Psoas muscle (tissue), 8 donors: ENCODE measurements at regions of chr12 and their contacts with region 1.

Region 1: GRCh38 chr12:59780605-59781135 is 184.8 kb downstream of the SLC16A7 start:
- DNase-seq: no peak
- ATAC-seq: no peak
- H3K4me3 ChIP-seq: no peak overlapping the region
- H3K27ac ChIP-seq: no peak overlapping the region
- H3K4me1 ChIP-seq: no peaks in the 10 kb centered on the region
- H3K27me3 ChIP-seq: no peaks in the 10 kb centered on the region
- CTCF ChIP-seq: no peak

Region 2: DNA sequence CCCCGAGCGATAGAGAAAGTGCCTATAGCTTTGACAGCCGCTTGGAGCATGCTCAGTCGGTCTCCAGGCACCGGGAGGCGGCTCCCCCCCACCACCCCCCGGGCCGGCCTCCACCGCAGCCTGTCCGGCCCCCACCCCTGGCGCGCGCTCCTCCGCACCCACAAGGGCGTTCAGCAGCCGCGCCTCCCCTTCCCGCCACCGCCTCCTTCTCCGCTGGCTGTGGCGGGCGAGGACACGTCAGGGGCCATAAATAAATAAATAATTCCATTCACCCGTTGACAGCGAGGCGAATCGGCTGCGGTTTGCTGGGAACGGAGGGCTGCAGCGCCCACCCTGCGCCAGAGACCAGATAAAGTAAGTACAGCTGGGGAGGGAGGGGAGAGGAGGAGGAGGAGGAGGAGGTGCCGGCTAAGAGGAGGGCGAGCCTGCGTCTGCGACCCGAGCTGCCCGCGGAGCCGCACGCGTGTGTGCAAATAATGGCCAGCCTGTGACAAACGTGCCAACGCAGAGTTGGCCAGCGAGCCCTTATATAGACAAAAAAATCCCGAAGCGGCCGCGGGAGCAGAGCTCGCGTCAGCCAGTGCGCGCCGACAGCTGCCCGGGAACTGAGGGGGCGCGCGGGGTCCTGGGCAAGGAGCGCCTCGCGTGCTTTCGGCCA is 184.7 kb before region 1 on chr12 and contains the start of gene SLC16A7:
- intact Hi-C with region 1: loop called in 1 of 2 experiments (anchors 10 kb)
- DNase-seq: peak; percentile 92 to 93
- ATAC-seq: peak; percentile 77 to 84 (median 82)
- H3K4me3 ChIP-seq: peak within 1 kb of the TSS; percentile 80
- H3K27ac ChIP-seq: peak within 1 kb of the TSS; percentile 84
- H3K4me1 ChIP-seq: peaks cover 8% of the 10 kb centered on the region
- H3K27me3 ChIP-seq: no peaks in the 10 kb centered on the region
- CTCF ChIP-seq: no peak
- total RNA-seq, gene SLC16A7: 5.0 to 27.4 (median 8.4) TPM